ENCODE measurements at regions of chr18 and their contacts with region 1.

Region 1: DNA sequence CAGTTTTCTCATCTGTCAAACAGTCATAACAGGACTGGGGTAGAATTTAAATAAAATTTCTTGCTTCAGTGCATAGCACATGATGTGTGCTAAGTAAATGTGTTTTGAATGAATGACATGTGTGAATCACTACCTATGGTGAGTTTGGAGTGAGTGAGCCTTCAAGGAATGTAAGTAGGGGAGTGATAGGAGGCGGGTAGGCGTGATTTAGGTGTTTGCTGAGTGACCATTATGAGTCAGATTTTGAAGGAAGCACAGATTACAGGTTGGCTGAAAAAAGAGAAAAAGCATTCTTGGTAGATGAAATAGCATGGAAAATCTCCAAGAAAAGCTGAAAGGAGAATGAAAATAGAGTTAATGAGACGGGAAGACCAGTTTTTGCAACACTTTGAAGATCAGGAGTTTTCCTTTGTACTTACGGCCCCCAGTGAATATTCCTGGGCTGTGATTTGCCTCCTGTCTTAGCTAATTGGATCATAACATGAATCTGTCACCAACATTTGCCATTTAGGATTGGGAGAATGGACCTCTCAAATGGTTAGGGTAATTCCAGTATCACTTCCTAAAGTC is 136.9 kb upstream of the GATA6 start:
- DNase-seq: no peak
- H3K4me3 ChIP-seq: no peak overlapping the region
- H3K27ac ChIP-seq: no peak overlapping the region
- H3K4me1 ChIP-seq: no peaks in the 10 kb centered on the region
- H3K27me3 ChIP-seq: peaks cover 0 to 25% (median 0%) of the 10 kb centered on the region in 4 donors
- CTCF ChIP-seq: no peak
- EP300 ChIP-seq: no peak
- POLR2A ChIP-seq: no peak

Region 2: DNA sequence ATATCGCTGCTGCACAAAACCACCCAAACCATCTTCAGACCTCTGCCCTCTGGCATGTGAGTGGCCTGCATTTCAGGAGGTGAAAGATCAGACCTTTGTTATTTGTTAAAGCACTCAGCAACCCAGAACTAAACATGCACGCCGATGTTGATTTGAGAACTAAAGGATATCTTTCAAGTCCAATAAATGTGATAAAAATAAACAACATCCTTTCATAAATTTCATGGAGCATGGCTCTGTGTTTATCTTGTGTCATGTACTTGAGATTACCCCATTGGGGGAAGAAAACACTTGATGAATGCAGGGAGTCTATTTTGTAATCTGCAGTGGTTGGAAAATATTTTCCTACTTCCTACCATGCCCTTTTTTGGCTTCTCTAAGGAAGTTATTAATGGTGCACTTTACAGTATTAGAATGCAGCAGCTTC is 66.1 kb after region 1 on chr18:
- intact Hi-C with region 1: loop called (anchors 10 kb)
- DNase-seq: no peak
- H3K4me3 ChIP-seq: no peak overlapping the region
- H3K27ac ChIP-seq: no peak overlapping the region
- H3K4me1 ChIP-seq: no peaks in the 10 kb centered on the region
- H3K27me3 ChIP-seq: no peaks in the 10 kb centered on the region
- CTCF ChIP-seq: no peak
- EP300 ChIP-seq: no peak
- POLR2A ChIP-seq: no peak

Region 3: GRCh38 chr18:22475426-22476100 is 443.1 kb after region 1 on chr18:
- intact Hi-C with region 1: loop called (anchors 5 kb)
- DNase-seq: no peak
- H3K4me3 ChIP-seq: no peak overlapping the region
- H3K27ac ChIP-seq: no peak overlapping the region
- H3K4me1 ChIP-seq: peaks cover 16 to 19% (median 18%) of the 10 kb centered on the region in 4 donors
- H3K27me3 ChIP-seq: no peaks in the 10 kb centered on the region
- CTCF ChIP-seq: no peak
- EP300 ChIP-seq: no peak
- POLR2A ChIP-seq: no peak